ENCODE measurements at regions of chr3 and their contacts with region 1.

Region 1: GRCh38 chr3:150703299-150704134 is at the start of gene ERICH6:
- DNase-seq: peak; percentile 77 to 98 (median 90)

Region 2: DNA sequence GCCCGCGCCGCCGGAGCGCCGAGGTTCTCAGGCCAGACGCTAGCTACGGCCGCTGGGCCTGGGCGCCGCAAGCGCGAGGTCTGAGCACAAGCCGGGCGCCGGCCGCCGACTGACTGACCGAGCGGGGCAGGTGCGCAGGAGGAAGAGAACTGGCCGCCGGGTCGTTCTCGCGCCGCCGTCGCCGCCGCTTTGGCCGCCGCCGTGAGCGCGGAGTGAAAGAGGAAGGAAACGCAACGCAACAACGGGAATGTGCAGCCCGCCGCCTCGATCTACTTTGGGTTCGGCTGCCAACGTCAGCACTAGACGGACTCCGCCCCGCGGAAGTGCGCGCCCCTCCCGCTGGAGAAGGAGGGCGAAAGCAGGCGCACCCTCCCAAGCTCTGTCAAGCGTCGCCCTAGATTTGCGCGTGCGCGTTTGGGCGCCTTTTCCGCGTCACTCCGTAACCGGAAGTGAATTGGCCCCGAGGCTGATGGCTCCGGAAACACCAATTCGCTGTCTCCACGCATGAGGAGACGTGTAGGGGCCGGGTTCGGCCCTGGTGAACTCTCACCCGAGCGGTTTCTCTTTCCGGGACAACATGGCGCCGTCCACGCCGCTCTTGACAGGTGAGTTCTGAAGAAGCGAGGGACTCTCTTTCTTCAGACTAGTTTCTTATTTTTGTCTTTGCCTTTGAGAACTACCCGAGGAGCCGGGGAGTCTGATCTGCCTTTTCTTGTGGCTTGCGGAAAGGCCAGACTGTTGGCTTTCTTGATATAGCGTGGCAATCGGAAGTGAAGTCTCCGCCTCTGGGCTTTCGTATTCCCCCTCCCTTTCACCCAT is 157.1 kb before region 1 on chr3 and contains the starts of genes EIF2A and SERP1:
- intact Hi-C with region 1: loop called (anchors 5 kb)
- DNase-seq: peak; percentile 98 to 100 (median 99)

Region 3: GRCh38 chr3:150787741-150788370 is 84.3 kb after region 1 on chr3:
- intact Hi-C with region 1: no loop called
- DNase-seq: peak; percentile 74 to 97 (median 88)

Region 4: GRCh38 chr3:150899141-150899540 is 195.6 kb after region 1 on chr3:
- intact Hi-C with region 1: no loop called
- DNase-seq: no peak